Activated CD8-positive, alpha-beta memory T cell treated with anti-CD3 and anti-CD28 coated beads, Interleukin-2, amount 10 ng/mL, durations not matched to agents 7 days and 5 days (primary cell): ENCODE measurements at regions of chr14 and their contacts with region 1.

Region 1: DNA sequence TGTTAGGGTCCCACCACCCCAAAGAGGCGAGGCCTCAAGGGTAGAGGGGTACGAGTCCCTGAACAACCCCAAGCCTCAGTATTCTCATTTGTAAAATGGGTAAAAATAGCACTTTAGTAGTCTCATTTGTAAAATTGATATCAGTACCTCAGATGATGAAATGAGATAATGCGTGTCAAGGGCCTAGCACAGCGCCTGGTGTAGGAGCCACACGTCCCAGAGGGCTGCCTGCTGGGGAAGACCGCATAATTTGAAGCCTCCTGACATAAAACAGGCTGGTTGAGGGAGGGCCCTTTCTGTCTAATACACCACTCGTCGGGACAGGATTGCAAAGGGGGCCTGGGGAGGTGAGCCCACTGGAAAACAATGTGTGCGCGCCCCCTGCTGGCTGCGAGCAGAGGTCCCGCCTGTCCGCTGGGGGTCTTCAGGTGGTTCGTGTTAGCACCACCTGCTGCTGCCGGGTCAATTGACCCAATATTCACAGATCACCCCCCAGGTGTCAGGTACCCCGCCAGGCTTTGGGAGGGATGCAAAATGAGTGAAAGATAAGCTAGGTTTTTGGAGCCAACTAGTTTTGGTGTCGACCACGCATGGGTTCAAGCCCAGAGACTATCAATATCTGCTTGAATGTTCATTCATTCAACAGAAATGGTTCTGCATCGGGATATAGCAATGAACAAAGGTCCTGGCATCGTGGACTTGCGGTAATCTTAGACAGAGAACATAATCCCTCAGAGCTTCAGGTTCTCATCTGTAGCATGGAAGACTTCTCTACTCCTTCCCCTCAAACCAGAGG is 24.7 kb upstream of the IRF2BPL start:
- DNase-seq: peak; percentile 78
- ATAC-seq: peak; percentile 92
- H3K4me3 Mint-ChIP-seq: no peak overlapping the region
- H3K27ac Mint-ChIP-seq: no peak overlapping the region
- H3K4me1 Mint-ChIP-seq: peaks cover 7% of the 10 kb centered on the region
- H3K27me3 Mint-ChIP-seq: no peaks in the 10 kb centered on the region

Region 2: DNA sequence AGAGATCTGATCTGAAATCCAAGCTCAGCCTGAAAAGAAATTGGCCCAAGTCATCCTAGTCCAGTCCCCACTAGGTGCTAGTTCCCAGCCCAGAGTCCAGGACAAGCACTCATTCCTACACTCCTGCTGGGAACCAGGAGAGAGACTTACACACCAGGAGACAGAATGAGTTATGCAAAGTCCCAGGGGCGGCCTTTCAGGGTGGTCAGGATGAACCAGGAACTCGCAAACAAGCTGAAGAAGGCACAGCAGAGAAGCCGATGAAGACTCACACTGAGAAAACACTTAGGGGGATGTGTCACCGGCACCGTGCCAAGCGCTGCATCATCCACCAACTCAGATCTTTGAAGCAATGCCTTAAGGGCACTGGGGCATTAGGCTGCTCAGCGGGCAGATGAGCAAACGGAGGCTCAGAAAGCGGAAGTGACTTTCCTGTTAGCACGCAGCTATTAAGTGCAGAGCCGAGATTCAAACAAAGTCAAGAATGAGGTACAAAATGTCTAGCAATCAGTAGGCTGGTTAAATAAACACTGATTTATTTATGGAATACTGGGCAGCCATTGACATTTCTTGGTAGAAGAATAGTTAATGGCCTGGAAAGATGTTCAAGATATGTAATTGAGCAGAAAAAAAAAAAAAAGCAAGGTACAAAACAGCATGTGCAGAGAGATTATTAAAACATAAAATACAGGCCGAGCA is 148.4 kb before region 1 on chr14:
- CTCF ChIA-PET with region 1: interaction called, 123 read pairs
- DNase-seq: peak; percentile 78
- ATAC-seq: peak; percentile 75
- H3K4me3 Mint-ChIP-seq: no peak overlapping the region
- H3K27ac Mint-ChIP-seq: no peak overlapping the region
- H3K4me1 Mint-ChIP-seq: peaks cover 29% of the 10 kb centered on the region
- H3K27me3 Mint-ChIP-seq: peaks cover 7% of the 10 kb centered on the region

Region 3: DNA sequence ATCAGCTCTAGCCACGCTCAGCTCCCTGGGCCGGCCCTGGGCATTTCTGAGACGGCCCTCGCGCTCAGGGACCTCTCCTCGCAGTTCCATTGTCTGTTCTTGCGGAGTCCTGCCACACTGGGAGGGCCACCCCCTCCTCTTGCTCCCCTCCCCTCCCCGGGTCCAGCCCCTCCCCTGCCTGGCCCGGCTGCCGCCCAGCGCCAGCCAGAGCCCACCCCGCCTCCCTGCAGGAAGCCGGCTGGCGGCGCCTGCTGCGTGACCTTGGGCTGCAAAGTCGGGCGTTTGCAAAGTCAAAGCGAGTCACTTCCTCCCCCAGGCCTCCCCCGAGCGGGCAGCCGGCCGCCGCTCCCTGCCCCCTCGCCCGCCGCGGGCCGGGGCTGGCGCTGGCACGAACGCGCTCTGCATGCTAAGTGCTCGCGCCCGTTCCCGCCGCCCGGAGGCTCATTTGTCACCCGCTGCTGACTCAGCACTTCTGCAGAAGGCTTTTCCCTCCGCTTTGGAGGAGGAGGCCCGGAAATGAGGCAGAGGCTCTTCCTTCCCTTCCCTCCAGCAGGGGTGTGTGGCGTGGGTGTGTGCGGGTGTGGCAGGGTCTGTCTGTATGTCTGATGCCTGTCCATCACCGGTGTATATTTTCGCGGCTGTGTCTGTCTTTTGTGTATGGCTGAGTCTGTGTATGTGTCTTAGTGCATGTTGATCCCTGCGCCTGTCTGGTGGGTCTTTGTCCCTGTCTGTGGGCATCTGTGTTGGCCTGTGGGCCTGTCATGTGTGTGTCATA is 96.7 kb before region 1 on chr14:
- CTCF ChIA-PET with region 1: interaction called, 15 read pairs
- DNase-seq: peak; percentile 95
- ATAC-seq: peak; percentile 67
- H3K4me3 Mint-ChIP-seq: peak overlapping the region; percentile 70
- H3K27ac Mint-ChIP-seq: peak overlapping the region; percentile 91
- H3K4me1 Mint-ChIP-seq: peaks cover 74% of the 10 kb centered on the region
- H3K27me3 Mint-ChIP-seq: no peaks in the 10 kb centered on the region

Region 4: GRCh38 chr14:76962303-76962660 is 91.0 kb before region 1 on chr14:
- CTCF ChIA-PET with region 1: interaction called, 15 read pairs
- DNase-seq: peak; percentile 48
- ATAC-seq: peak; percentile 11
- H3K4me3 Mint-ChIP-seq: peak overlapping the region; percentile 42
- H3K27ac Mint-ChIP-seq: peak overlapping the region; percentile 95
- H3K4me1 Mint-ChIP-seq: peaks cover 74% of the 10 kb centered on the region
- H3K27me3 Mint-ChIP-seq: peaks cover 46% of the 10 kb centered on the region

Region 5: DNA sequence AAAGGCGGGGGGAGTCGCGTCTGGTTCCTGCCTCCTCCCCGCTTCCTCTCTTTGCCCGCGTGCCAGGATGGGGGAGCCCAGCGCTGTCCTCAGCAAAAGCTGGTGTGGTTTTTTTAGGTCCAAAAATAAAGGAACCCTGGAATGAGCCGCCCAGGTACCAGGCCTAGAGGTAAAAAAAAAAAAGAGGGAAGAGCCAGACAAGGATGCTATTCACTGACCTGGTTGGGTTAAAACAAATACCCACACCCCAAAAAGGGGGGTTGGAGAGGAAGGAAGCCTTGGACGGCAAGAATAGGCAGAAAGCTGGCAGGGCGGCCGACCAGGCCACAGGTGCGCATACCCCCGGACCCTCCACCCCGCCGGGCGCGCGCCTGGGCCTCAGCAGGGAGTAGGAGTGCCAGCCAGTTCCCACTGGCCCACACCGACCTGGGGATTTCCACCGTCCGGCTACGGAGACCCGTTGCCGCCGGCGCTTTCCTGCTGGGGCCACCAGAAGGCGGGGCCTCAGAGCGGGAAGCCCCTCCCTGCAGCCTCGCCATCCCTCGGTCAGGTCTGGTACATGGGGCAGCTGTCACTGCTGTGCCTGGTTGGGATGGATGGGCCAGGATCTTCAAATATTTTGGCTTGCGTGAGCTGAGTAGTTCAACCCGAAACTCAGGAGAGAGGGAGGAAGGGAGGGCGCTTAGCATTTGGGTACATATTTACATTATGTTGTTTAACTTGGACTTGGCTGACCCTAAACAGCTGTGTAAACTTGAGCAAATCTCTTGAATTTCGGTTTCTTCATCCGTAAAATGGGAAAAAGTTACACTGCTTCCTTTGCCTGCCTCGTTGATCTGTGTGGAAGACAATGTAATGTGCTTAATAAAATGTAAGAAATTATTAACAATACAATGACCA is 19.4 kb before region 1 on chr14:
- CTCF ChIA-PET with region 1: interaction called, 15 read pairs
- DNase-seq: peak; percentile 91
- ATAC-seq: peak; percentile 76
- H3K4me3 Mint-ChIP-seq: peak overlapping the region; percentile 77
- H3K27ac Mint-ChIP-seq: peak overlapping the region; percentile 94
- H3K4me1 Mint-ChIP-seq: peaks cover 72% of the 10 kb centered on the region
- H3K27me3 Mint-ChIP-seq: no peaks in the 10 kb centered on the region

Region 6: DNA sequence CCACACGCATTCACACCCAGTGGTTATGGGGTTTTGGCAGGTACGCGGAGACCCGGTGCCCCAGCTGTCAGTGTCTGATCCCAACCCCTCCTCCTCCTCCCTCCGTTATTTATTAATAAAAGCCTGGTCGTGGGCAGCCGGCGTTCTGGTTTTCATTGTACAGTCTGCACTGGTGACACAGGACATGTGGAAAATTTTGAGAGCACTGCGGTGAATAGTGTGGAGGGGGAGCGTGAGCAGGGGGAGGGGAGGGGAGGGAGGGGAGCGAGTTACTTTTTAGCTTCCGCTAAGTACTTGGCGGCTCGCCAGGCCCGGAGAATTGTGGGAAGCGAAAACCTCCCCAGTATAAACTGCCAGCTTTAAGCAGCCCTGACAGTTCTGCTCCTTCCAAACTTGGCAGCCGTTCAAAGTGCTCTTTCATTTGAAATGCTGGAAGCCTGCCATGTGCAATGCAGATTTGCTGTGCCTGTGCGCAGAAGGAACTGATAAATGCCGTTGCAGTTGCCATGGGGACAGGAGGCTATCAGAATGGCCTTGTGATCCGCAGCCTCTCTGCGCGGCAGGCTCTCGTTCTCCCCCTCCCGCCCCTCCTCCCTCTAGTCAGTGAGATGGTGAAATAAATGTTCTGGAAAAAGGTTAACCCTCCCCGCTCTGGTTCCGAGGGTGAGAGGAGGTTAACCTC is 13.0 kb before region 1 on chr14:
- CTCF ChIA-PET with region 1: interaction called, 16 read pairs
- DNase-seq: peak; percentile 94
- ATAC-seq: peak; percentile 74
- H3K4me3 Mint-ChIP-seq: peak overlapping the region; percentile 67
- H3K27ac Mint-ChIP-seq: peak overlapping the region; percentile 97
- H3K4me1 Mint-ChIP-seq: peaks cover 88% of the 10 kb centered on the region
- H3K27me3 Mint-ChIP-seq: no peaks in the 10 kb centered on the region